ENCODE measurements at regions of chr5 and their contacts with region 1.

Region 1: GRCh38 chr5:113059232-113060040 is 82.8 kb downstream of the DCP2 start:
- DNase-seq: no peak
- H3K4me3 Mint-ChIP-seq: no peak overlapping the region
- H3K27ac Mint-ChIP-seq: no peak overlapping the region
- H3K4me1 Mint-ChIP-seq: peaks cover 21% of the 10 kb centered on the region
- H3K27me3 Mint-ChIP-seq: no peaks in the 10 kb centered on the region

Region 2: DNA sequence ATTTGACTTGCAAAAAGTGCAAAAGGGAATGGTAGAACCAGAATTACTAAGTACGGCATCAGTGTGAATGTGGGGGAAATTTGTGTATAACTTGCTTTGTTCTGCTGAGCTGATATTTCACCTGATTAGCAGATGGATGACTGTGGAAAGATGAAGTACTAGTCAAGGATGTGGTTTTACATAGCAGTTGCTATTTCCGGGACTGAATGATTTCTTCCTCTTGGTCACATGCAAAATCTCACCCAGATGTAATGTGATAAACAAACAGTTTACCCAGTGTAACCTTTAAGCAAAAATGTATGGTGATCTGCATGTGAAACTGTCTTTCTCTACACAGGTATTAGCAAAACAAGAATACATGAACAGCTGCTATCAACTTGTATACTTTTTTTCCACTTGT is 36.8 kb before region 1 on chr5:
- intact Hi-C with region 1: loop called (anchors 5 kb)
- DNase-seq: peak; percentile 82
- H3K4me3 Mint-ChIP-seq: peak overlapping the region; percentile 59
- H3K27ac Mint-ChIP-seq: peak overlapping the region; percentile 75
- H3K4me1 Mint-ChIP-seq: peaks cover 48% of the 10 kb centered on the region
- H3K27me3 Mint-ChIP-seq: no peaks in the 10 kb centered on the region

Region 3: GRCh38 chr5:113864437-113864836 is 805.0 kb after region 1 on chr5:
- intact Hi-C with region 1: no loop called
- DNase-seq: no peak
- H3K4me3 Mint-ChIP-seq: no peak overlapping the region
- H3K27ac Mint-ChIP-seq: no peak overlapping the region
- H3K4me1 Mint-ChIP-seq: no peaks in the 10 kb centered on the region
- H3K27me3 Mint-ChIP-seq: no peaks in the 10 kb centered on the region